PC-9 (cell line): ENCODE measurements at regions of chr2 and their contacts with region 1.

Region 1: DNA sequence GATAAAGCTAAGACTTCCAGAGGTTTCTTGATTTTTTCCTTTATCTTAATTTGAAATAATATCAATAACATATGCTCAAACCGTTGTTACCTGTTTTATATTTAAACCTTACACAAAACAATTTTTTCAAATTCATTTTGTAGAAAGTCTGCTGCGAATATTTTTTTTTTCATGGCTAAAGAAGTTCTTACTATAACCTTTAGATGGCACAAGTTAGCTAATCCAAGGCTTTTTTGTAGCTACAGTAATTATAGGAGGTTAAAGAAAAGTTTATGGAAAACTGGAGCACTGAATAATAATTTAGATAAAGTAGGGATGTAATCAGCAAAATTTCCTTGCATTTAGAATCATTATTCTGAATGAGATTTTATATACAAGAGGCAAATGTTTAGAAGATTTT is 78.0 kb upstream of the PNPT1 start:
- DNase-seq: peak in 1 of 2 experiments; percentile 56
- H3K4me3 ChIP-seq: no peak overlapping the region
- H3K27ac ChIP-seq: no peak overlapping the region
- H3K4me1 ChIP-seq: 0 out of 2 replicates have a peak, but pooled peaks cover 5% of the 10 kb centered on the region
- H3K27me3 ChIP-seq: no peaks in the 10 kb centered on the region
- CTCF ChIP-seq: peak; percentile 95

Region 2: GRCh38 chr2:55718165-55719008 is 53.2 kb before region 1 on chr2:
- CTCF ChIA-PET with region 1: interaction called, 4 read pairs
- POLR2A ChIA-PET with region 1: no interaction called
- intact Hi-C with region 1: loop called (anchors 1 kb)
- DNase-seq: peak; percentile 53 to 58
- H3K4me3 ChIP-seq: no peak overlapping the region
- H3K27ac ChIP-seq: no peak overlapping the region
- H3K4me1 ChIP-seq: peaks cover 17% of the 10 kb centered on the region
- H3K27me3 ChIP-seq: no peaks in the 10 kb centered on the region
- CTCF ChIP-seq: peak; percentile 97

Region 3: GRCh38 chr2:55843096-55843993 is 71.7 kb after region 1 on chr2:
- CTCF ChIA-PET with region 1: no interaction called
- POLR2A ChIA-PET with region 1: no interaction called
- intact Hi-C with region 1: loop called (anchors 2 kb)
- DNase-seq: peak; percentile 39 to 96
- H3K4me3 ChIP-seq: 0 out of 2 replicates have a peak overlapping the region, but pooled peaks have one; percentile 6
- H3K27ac ChIP-seq: peak overlapping the region; percentile 70
- H3K4me1 ChIP-seq: peaks cover 67% of the 10 kb centered on the region
- H3K27me3 ChIP-seq: no peaks in the 10 kb centered on the region
- CTCF ChIP-seq: no peak

Region 4: DNA sequence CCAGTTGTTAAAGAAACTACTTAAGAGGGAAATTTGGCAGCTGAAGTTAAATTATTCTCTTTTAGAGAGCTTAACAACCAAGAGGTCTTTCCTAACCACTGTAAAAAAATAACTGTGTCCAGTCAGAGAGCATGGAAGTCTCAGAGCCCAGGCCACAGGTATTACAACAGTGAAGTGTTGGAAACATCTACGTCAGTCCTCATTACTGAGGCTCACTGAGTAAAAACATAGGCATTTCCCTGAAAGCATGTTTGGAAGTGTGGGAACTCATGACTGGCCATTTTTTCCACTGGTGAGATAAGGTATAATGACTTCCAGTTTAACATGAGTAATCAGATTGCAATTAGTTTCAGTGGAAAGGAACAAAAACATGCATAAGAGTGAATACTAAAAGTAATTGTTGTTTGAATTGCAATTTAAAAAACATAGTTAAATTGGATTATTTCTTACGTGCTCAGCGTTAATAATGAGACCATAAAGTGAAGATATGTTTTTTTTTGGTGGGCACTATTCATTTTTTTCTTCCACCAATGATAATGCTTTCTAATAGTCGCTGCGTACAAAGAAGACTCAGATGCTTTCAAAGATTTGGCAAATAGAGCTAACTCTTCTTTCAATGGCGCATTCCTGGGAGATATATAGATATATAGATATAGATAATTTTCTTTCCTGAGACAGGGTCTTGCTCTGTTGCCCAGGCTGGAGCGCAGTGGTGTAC is 91.2 kb after region 1 on chr2:
- CTCF ChIA-PET with region 1: no interaction called
- POLR2A ChIA-PET with region 1: no interaction called
- intact Hi-C with region 1: loop called (anchors 1 kb)
- DNase-seq: peak; percentile 65 to 99
- H3K4me3 ChIP-seq: no peak overlapping the region
- H3K27ac ChIP-seq: peak overlapping the region; percentile 80
- H3K4me1 ChIP-seq: peaks cover 32% of the 10 kb centered on the region
- H3K27me3 ChIP-seq: no peaks in the 10 kb centered on the region
- CTCF ChIP-seq: no peak

Region 5: DNA sequence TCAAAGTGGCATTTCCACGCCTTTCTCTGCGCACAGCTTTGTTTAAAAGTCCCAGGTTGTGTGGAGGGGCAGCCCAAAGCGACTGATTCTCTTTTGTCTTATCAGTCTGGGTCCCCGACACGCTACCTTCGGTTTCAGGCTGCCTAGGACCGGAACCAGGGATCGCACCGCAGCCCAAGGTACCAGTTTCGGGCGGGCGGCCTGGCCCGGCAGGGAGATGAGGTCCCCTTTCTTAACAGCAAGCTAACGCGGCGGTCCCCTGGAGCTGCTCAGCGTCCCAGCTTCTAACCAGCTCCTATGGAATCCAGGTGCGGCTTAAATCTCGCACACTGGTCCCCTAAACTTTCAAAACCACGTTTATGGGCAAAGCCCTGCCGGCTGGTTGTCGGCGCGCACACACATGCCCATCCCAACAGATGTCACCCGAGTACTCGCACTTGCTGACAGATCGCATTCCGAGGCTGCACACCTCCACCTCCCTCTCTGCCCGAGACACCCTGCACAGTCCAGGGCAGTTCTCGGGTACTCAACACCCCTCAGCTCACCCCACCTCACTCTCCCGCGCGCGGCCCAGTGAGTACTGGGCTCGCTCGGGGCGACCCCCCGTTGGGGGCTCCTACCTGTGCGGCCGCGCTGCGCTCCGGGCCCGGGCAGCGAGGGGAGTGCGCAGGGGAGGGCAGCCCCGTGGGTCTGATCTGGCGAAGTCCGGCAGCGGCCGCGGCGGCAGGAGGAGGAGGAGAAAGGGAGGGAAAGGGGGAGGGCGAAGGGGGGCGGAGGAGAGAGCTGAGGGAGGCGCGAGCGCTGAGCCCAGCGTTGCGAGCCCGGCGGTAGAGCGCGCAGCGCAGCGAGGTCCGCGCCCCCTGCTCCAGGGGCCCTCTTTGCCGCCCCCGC is 151.7 kb after region 1 on chr2 and contains the start of gene EFEMP1:
- CTCF ChIA-PET with region 1: interaction called, 4 read pairs
- POLR2A ChIA-PET with region 1: no interaction called
- intact Hi-C with region 1: loop called (anchors 5 kb)
- DNase-seq: peak; percentile 56 to 80
- H3K4me3 ChIP-seq: peak within 1 kb of the TSS; percentile 62
- H3K27ac ChIP-seq: no peak within 1 kb of the TSS
- H3K4me1 ChIP-seq: peaks cover 6% of the 10 kb centered on the region; the same call in 1 of the 2 replicates
- H3K27me3 ChIP-seq: peaks cover 22% of the 10 kb centered on the region; the same call in 1 of the 2 replicates
- CTCF ChIP-seq: no peak
- total RNA-seq, gene EFEMP1: 61.3 and 86.3 TPM in 2 replicates

Region 6: DNA sequence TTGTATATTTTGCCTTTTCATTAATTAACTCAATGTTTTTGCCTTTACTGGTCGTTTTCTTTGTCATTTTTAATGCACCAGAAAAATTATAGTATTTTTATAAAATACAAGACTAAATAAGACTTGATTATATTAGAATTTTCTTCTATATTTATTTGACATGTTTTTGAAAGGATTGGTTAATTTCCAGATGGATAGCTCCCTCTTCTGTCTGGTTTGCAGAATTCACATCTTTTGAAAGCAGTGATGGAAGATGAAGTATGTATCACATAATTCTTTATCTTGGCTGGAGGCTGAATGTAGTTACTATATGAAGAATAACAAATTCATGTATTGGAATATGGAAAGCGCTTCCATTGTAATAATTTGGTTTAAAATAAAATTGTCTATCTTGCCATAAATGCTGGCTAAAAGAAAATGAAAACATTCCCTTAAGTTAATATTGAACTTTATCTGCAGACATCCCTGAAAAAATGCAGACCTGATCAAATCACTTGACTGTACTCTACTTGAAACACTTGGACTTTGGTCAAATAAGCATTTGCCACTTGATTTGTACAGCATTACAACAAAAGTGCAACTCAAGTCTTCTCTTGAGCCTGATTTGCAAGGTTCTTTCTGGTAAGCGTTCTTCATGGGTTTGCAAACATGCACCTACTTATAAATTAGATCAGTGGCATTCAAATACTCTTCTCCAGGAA is 238.3 kb after region 1 on chr2:
- CTCF ChIA-PET with region 1: interaction called, 4 read pairs
- POLR2A ChIA-PET with region 1: no interaction called
- intact Hi-C with region 1: loop called (anchors 1 kb)
- DNase-seq: peak in 1 of 2 experiments; percentile 63
- H3K4me3 ChIP-seq: no peak overlapping the region
- H3K27ac ChIP-seq: no peak overlapping the region
- H3K4me1 ChIP-seq: no peaks in the 10 kb centered on the region
- H3K27me3 ChIP-seq: no peaks in the 10 kb centered on the region
- CTCF ChIP-seq: peak; percentile 89

Region 7: DNA sequence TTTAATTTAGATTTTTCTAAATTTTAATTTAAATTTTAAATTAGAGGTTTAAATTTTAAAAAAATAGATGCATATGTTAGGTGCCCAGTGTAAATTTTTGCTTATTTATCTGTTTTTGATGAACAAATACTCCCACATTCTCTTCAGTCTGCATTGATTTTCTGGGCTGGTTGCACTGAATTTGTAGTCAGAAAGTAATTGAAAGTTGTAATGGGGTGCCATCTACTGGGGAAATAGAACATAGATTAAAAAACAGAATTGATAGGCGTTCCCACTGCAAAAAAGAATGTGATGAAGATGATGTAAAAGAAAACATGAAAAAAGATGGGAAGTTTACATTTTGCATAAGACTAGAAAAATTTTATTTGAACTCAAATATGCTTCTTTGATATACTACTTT is 360.5 kb after region 1 on chr2:
- CTCF ChIA-PET with region 1: interaction called, 4 read pairs
- POLR2A ChIA-PET with region 1: no interaction called
- intact Hi-C with region 1: loop called (anchors 5 kb)
- DNase-seq: peak in 1 of 2 experiments; percentile 50
- H3K4me3 ChIP-seq: no peak overlapping the region
- H3K27ac ChIP-seq: no peak overlapping the region
- H3K4me1 ChIP-seq: no peaks in the 10 kb centered on the region
- H3K27me3 ChIP-seq: peaks cover 15% of the 10 kb centered on the region
- CTCF ChIP-seq: peak; percentile 75